ENCODE measurements at regions of chr15 and their contacts with region 1.

Region 1: DNA sequence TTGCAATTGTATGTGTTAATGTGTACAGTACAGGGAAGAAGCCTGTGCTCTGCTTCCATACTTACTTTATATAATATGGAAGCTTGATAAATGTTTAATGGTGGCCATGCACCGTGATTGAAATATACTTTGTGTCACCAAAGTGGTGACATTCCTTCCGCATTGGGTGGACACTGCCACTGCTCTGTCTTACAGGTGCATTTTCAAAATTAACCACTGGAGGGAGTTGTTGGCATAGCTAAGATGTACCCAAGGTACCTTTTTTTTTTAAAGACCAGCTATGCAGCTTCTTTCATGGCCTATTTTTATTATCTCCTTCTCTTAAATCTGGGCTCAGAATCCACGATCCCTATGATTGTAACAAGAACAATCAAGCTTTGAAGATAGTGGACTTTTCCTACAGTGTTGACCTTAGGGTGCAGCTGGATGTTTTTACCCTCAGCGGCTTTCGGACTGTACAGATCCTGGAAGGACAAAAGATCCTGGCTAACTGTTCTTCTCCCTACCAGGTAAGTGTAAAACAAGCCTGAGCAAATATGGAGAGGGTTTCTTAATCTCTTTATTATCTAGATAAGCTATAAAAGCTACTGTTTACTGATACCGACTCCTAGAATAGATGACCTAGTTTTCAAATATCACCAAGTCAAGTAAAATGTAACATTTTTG is 21.6 kb upstream of the PAK6 start:
- DNase-seq: no peak
- H3K4me3 ChIP-seq: no peak overlapping the region
- H3K27ac ChIP-seq: no peak overlapping the region
- H3K4me1 ChIP-seq: no peaks in the 10 kb centered on the region
- H3K27me3 ChIP-seq: no peaks in the 10 kb centered on the region
- CTCF ChIP-seq: peak; percentile 63 to 78 (median 76)

Region 2: GRCh38 chr15:40274350-40275274 is 57.3 kb after region 1 on chr15:
- dilution Hi-C with region 1: loop called (anchors 5 kb)
- DNase-seq: no peak
- H3K4me3 ChIP-seq: no peak overlapping the region
- H3K27ac ChIP-seq: no peak overlapping the region
- H3K4me1 ChIP-seq: no peaks in the 10 kb centered on the region
- H3K27me3 ChIP-seq: no peaks in the 10 kb centered on the region
- CTCF ChIP-seq: peak; percentile 100